Prostate gland (tissue), 2 donors: ENCODE measurements at regions of chr3 and their contacts with region 1.

Region 1: DNA sequence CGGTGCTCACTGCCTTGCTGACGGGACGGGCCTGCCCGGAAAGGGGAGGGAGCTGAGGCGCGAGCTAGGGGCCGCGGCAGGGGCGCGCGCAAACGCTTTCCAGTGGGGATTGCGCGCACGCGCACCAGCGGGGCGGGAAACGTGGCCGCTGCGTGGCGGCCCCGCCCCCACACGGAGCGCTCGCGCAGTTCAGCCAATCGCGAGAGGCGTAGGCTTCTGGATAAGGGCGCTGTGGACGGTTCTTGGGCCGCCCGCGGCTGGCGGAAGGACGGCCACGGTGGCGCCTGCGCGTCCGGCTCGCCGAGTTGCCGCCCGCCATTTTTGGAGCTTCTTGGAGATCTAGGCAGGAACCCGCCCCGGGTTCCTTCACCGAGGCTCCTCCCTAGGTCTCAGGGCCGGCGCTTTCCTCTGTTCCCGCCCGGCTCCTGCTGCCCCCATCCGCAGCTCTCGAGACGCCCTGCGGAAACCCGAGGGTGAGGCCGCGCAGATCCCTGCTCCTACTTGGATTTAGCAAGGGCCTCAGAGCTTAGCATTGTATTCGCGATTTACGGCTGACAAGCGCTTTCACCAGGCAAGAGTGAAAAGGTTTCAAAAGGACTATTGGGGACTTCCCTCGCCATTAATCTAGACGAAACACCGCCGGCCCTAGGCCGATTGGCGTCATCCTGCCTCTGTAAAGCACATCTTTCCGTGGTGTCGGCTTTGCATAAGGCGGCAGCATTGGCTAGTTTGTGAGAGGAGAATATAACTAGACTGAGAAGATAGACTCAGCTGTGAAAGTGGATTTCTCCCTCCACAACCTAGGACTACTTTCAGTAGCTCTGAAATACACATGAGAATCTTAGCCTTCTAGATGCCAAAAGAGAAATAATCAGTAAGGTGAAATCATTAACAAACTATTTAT is 496 bp upstream of the STAG1 start:
- DNase-seq: peak; percentile 98
- H3K4me3 ChIP-seq: peak overlapping the region; percentile 84 to 98
- H3K27ac ChIP-seq: peak overlapping the region; percentile 99
- H3K4me1 ChIP-seq: no peaks in the 10 kb centered on the region
- H3K27me3 ChIP-seq: no peaks in the 10 kb centered on the region
- CTCF ChIP-seq: peak in 2 of 4 experiments; percentile 100
- POLR2A ChIP-seq: peak; percentile 87

Region 2: DNA sequence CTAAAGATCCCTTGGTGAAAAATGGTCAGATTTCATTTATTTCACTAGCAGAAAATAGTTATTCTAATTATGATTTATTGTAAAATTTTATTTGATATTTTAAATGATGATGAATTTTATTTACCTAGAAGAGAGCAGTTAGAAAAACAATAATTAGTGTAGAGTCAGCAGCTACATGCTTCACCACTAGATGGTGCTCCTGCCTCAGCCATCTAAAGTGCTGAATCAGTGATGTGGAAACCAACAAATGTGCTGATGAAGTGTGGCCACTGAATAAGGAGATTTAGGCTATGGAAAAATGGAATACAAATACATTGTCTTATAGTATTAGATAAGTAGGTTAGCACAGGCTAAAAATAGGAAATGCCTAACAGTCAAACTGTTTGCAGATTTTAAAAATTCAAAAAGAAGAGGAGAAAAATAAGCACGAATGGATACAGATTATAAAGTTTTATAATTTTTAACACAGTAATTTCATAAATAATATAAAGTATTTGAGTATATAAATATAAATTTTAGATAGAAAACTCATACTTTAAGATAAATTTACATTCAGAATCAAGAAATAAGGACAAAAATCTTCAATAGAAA is 677.4 kb before region 1 on chr3:
- intact Hi-C with region 1: loop called (anchors 2 kb)
- DNase-seq: peak; percentile 69
- H3K4me3 ChIP-seq: no peak overlapping the region
- H3K27ac ChIP-seq: no peak overlapping the region
- H3K4me1 ChIP-seq: no peaks in the 10 kb centered on the region
- H3K27me3 ChIP-seq: no peaks in the 10 kb centered on the region
- CTCF ChIP-seq: peak; percentile 85 to 93 (median 91)
- POLR2A ChIP-seq: no peak

Region 3: DNA sequence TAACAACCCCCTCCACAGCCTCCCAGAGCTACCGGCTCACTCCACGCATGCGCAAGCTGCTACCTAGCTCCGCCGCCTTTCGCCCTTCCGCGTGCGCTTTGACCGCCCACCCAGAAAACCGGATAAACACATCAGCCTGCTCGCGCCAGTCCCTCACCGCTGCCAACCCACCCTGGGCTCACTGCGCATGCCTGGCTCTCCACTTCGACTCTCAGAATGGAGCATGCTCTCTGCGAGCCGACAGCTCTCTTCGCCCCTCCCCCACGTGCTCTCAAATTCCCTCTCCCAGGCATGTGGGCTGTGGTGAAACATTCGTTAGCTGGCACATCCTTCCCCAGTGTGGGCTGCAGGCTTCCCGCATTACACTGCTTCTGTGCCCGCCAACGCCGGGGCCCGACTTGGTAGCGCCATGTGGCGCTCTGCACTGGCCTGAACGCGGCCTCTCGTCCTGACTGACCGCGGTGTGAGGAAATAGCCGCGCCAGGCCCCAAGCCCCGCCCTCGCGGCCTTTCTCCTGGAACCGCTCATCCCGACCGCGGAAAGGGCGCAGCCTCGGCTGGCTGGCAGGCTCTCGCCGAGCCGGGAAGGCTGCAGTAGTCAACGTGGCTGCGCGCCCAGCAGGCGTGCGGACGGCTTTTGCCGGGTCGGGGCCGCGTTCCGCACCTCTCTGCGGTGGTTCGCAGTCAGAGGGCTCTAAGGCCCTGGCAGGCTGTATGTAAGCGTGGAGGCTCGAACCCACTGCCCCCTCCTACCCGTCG is 556.1 kb before region 1 on chr3:
- intact Hi-C with region 1: loop called (anchors 2 kb)
- DNase-seq: peak; percentile 99
- H3K4me3 ChIP-seq: peak overlapping the region; percentile 88 to 99
- H3K27ac ChIP-seq: peak overlapping the region; percentile 99 to 100
- H3K4me1 ChIP-seq: peaks cover 2% of the 10 kb centered on the region
- H3K27me3 ChIP-seq: no peaks in the 10 kb centered on the region
- CTCF ChIP-seq: peak in 2 of 4 experiments; percentile 12 to 19
- POLR2A ChIP-seq: peak; percentile 75

Region 4: DNA sequence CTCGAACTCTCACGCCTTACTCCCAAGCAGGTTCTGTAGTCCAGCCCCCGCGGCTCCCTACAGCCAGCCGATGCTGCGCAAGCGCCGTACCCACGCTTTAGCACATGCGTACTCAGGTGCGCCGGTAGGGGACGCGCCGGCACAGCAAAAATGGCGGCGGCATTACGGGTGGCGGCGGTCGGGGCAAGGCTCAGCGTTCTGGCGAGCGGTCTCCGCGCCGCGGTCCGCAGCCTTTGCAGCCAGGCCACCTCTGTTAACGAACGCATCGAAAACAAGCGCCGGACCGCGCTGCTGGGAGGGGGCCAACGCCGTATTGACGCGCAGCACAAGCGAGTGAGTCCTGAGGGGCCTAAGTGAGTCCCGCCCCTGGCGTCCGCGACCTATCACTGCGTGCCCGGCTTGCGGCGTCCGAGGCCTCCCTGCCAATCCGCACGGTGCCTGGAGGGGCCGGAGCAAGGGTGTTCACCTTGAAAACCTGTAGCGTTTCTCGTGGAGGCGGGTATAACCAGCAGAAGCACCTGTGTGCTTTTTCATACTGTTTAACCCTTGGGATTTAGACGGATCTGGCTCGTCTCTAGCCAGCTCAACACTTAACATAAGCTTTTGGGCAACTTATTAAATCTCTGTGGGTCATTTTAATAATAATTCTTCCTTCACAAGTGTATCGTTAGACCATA is 502.3 kb before region 1 on chr3 and contains the start of gene PCCB:
- intact Hi-C with region 1: loop called (anchors 2 kb)
- DNase-seq: peak; percentile 94
- H3K4me3 ChIP-seq: peak within 1 kb of the TSS; percentile 52 to 79
- H3K27ac ChIP-seq: peak within 1 kb of the TSS; percentile 85 to 90
- H3K4me1 ChIP-seq: peaks cover 4% of the 10 kb centered on the region
- H3K27me3 ChIP-seq: no peaks in the 10 kb centered on the region
- CTCF ChIP-seq: peak; percentile 74 to 96 (median 89)
- POLR2A ChIP-seq: peak; percentile 31
- total RNA-seq, gene PCCB: 60.9 to 70.3 TPM

Region 5: DNA sequence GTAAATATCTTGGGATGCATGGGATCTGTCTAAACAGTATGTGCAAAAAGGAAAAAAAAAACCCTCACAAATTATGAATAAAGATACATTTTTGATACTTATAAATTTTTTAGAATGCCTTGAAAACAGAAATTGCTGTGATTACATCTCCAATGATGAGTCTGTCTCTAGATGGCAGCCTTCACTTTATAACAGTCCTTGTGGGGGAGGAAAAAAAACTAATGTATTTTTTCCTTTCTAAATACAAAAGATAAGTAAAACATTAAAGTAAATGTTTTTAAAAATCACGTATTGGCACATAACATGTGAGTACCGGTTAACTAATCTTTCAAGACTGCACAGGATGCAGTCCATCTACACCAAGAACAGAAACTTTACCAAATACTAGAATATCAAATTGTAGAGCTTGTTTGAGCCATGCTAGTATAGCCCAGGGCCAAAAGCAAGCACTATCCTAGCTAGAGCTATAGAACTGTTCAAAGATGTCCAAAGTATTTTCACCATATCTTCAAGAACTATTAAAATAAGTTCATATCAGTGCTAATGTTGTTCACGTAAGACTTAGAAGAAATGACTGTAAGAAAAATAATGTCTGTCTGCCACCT is 206.9 kb before region 1 on chr3:
- intact Hi-C with region 1: loop called (anchors 5 kb)
- DNase-seq: no peak
- H3K4me3 ChIP-seq: no peak overlapping the region
- H3K27ac ChIP-seq: no peak overlapping the region
- H3K4me1 ChIP-seq: no peaks in the 10 kb centered on the region
- H3K27me3 ChIP-seq: no peaks in the 10 kb centered on the region
- CTCF ChIP-seq: no peak
- POLR2A ChIP-seq: no peak

Region 6: GRCh38 chr3:136861890-136862616 is 109.4 kb after region 1 on chr3 and contains the start of gene NCK1:
- intact Hi-C with region 1: loop called (anchors 2 kb)
- DNase-seq: peak; percentile 99
- H3K4me3 ChIP-seq: peak within 1 kb of the TSS; percentile 93
- H3K27ac ChIP-seq: peak within 1 kb of the TSS; percentile 97 to 98
- H3K4me1 ChIP-seq: no peaks in the 10 kb centered on the region
- H3K27me3 ChIP-seq: no peaks in the 10 kb centered on the region
- CTCF ChIP-seq: peak in 3 of 4 experiments; percentile 5 to 44 (median 27)
- POLR2A ChIP-seq: peak; percentile 95
- total RNA-seq, gene NCK1: 23.3 to 35.6 TPM

Region 7: GRCh38 chr3:137013955-137014688 is 261.4 kb after region 1 on chr3:
- intact Hi-C with region 1: loop called (anchors 1 kb)
- DNase-seq: peak; percentile 92
- H3K4me3 ChIP-seq: peak overlapping the region; percentile 23 to 35
- H3K27ac ChIP-seq: peak overlapping the region; percentile 64 to 65
- H3K4me1 ChIP-seq: no peaks in the 10 kb centered on the region
- H3K27me3 ChIP-seq: no peaks in the 10 kb centered on the region
- CTCF ChIP-seq: peak; percentile 88 to 98 (median 95)
- POLR2A ChIP-seq: no peak